Thyroid gland (tissue), 4 donors: ENCODE measurements at regions of chr2 and their contacts with region 1.

Region 1: GRCh38 chr2:37776487-37776886 is 105.0 kb upstream of the CDC42EP3 start:
- DNase-seq: no peak
- H3K4me3 ChIP-seq: no peak overlapping the region
- H3K27ac ChIP-seq: no peak overlapping the region
- H3K4me1 ChIP-seq: peaks cover 0 to 13% of the 10 kb centered on the region in 2 donors
- H3K27me3 ChIP-seq: no peaks in the 10 kb centered on the region
- CTCF ChIP-seq: no peak
- POLR2A ChIP-seq: no peak

Region 2: GRCh38 chr2:37672104-37672869 is 104.2 kb before region 1 on chr2:
- intact Hi-C with region 1: loop called (anchors 10 kb)
- DNase-seq: peak; percentile 86
- H3K4me3 ChIP-seq: peak overlapping the region; percentile 68 to 99 (median 97)
- H3K27ac ChIP-seq: peak overlapping the region; percentile 90 to 95 (median 94)
- H3K4me1 ChIP-seq: peaks cover 4 to 5% of the 10 kb centered on the region in 2 donors
- H3K27me3 ChIP-seq: no peaks in the 10 kb centered on the region
- CTCF ChIP-seq: no peak
- POLR2A ChIP-seq: peak in 1 of 2 donors; percentile 34